ENCODE measurements at regions of chr12 and their contacts with region 1.

Region 1: GRCh38 chr12:92608151-92609091 is 94.4 kb upstream of the PLEKHG7 start:
- DNase-seq: no peak
- H3K4me3 ChIP-seq: no peak overlapping the region
- H3K27ac ChIP-seq: no peak overlapping the region
- H3K4me1 ChIP-seq: peaks cover 2 to 10% (median 4%) of the 10 kb centered on the region in 4 experiments; a peak in 3 of 7 replicates
- H3K27me3 ChIP-seq: no peaks in the 10 kb centered on the region
- CTCF ChIP-seq: peak in 2 of 3 experiments; percentile 43 to 62; a peak in 2 of 4 replicates
- EP300 ChIP-seq: no peak
- POLR2A ChIP-seq: no peak
- RAD21 ChIP-seq: peak; percentile 60 to 69

Region 2: GRCh38 chr12:92597997-92598396 is 10.4 kb before region 1 on chr12:
- CTCF ChIA-PET with region 1: interaction called, 17 read pairs
- POLR2A ChIA-PET with region 1: no interaction called
- DNase-seq: no peak
- H3K4me3 ChIP-seq: no peak overlapping the region
- H3K27ac ChIP-seq: no peak overlapping the region
- H3K4me1 ChIP-seq: no peaks in the 10 kb centered on the region
- H3K27me3 ChIP-seq: no peaks in the 10 kb centered on the region
- CTCF ChIP-seq: no peak
- EP300 ChIP-seq: no peak
- POLR2A ChIP-seq: no peak
- RAD21 ChIP-seq: no peak

Region 3: DNA sequence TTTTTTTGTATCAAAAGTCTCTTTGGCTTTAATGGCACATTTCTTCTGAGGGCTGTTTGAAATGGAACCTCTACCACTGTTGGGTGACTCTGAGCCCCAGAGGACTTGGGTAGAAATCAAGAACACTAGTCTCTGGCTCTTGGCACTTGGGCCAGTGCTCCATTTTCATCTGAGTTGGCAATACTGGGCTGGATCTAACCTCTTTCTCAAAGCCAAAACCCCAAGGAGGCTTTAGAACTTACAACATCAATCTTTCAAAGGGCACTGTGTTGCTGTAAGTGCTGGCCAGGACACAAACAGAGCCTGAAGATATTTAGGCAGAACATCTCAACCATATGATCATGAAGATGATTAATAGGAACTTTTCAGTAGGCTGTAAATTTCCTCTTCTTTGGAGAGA is 60.3 kb after region 1 on chr12:
- CTCF ChIA-PET with region 1: no interaction called
- POLR2A ChIA-PET with region 1: no interaction called
- DNase-seq: no peak
- H3K4me3 ChIP-seq: no peak overlapping the region
- H3K27ac ChIP-seq: no peak overlapping the region
- H3K4me1 ChIP-seq: no peaks in the 10 kb centered on the region
- H3K27me3 ChIP-seq: no peaks in the 10 kb centered on the region
- CTCF ChIP-seq: no peak
- EP300 ChIP-seq: no peak
- POLR2A ChIP-seq: no peak
- RAD21 ChIP-seq: no peak

Measured in H1 (cell line).